ENCODE measurements at regions of chr1 and their contacts with region 1.

Region 1: GRCh38 chr1:112614460-112615065 is 4.4 kb downstream of the ST7L start:
- DNase-seq: peak; percentile 11
- H3K4me3 ChIP-seq: no peak overlapping the region
- H3K27ac ChIP-seq: no peak overlapping the region
- H3K27me3 ChIP-seq: no peaks in the 10 kb centered on the region
- CTCF ChIP-seq: peak; percentile 82

Region 2: GRCh38 chr1:112466078-112466660 is 148.4 kb before region 1 on chr1:
- CTCF ChIA-PET with region 1: interaction called, 14 read pairs
- POLR2A ChIA-PET with region 1: no interaction called
- DNase-seq: peak; percentile 89
- H3K4me3 ChIP-seq: peak overlapping the region; percentile 55
- H3K27ac ChIP-seq: peak overlapping the region; percentile 69
- H3K27me3 ChIP-seq: no peaks in the 10 kb centered on the region
- CTCF ChIP-seq: peak; percentile 80

Region 3: DNA sequence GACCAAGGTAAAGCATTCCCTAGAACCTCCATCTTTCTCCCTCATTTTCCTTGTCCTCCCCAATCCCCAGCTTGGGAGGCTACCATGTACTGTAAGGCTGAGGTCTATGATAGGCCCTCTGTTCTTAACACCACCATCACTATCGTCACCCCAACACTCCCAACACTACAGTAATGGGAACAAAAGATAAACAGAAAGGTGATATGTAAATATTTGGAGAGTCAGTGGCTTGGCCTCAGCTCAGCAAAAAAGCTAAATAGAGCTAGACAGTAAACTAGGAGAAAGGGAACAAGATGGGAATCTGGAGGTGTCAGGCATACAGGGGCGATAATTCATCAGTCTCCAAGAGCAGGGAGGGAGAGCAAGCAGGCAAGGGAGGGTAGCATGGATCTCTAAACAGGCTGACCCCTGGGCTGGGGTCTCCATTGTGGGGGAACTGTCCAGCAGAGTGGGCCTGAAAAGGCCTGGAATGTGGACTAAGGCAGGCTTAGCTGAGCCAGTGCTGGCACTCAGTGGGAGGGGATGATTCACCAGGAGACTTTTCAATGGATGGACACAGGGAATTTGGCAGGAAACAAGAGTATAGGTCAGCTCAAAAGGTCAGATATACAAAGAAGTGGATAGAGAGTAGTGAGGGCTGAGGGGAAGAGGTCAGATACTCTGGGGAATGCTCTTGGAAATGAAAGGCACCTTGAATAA is 99.1 kb before region 1 on chr1:
- CTCF ChIA-PET with region 1: interaction called, 10 read pairs
- POLR2A ChIA-PET with region 1: no interaction called
- DNase-seq: no peak
- H3K4me3 ChIP-seq: no peak overlapping the region
- H3K27ac ChIP-seq: peak overlapping the region; percentile 31
- H3K27me3 ChIP-seq: peaks cover 43% of the 10 kb centered on the region
- CTCF ChIP-seq: no peak

Region 4: GRCh38 chr1:112625696-112626095 is 11.1 kb after region 1 on chr1:
- CTCF ChIA-PET with region 1: no interaction called
- POLR2A ChIA-PET with region 1: no interaction called
- DNase-seq: no peak
- H3K4me3 ChIP-seq: no peak overlapping the region
- H3K27ac ChIP-seq: no peak overlapping the region
- H3K27me3 ChIP-seq: no peaks in the 10 kb centered on the region
- CTCF ChIP-seq: no peak

Measured in AG04450 (cell line).